Heart left ventricle (tissue), 16 donors: ENCODE measurements at regions of chr16 and their contacts with region 1.

Region 1: DNA sequence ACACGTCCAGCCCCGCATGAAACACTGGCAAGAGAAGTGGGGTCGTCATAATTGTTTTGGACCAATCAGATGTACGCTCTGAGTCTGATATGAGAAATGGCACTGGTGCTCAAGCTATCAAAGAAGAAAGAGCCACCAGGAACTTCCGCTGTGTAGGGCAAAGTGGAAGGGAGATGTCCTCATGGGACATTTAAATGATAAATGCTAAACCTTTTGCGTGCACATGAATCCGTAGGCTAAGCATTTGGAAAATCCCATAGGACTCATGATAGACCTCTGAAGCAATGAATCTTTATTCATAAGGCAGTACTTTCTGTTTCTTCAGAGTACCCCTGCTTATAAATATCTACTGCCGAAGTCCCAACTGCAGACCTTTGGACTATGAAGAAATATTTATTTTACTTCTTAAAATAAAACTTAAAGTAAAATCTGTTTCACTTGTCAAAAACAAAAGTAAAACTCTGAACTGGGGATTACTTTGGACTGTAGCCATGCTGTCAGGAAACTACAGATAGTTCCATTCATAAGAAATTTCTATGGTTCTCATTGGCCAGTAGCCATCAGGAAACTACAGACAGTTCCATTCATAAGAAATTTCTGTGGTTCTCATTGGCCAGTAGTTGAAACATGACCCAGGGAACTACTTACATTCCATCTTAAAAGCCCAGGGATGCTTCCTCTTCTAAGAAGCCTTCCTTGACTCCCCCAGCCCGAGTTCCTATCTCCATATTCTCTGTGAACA is 335.1 kb downstream of the HS3ST4 start:
- DNase-seq: peak in 1 of 5 donors; percentile 8
- ATAC-seq: peak in 1 of 4 donors; percentile 52
- H3K4me3 ChIP-seq: no peak overlapping the region
- H3K27ac ChIP-seq: no peak overlapping the region
- H3K4me1 ChIP-seq: peaks cover 0 to 3% (median 0%) of the 10 kb centered on the region in 12 donors
- H3K27me3 ChIP-seq: peaks cover 0 to 7% (median 0%) of the 10 kb centered on the region in 9 donors
- CTCF ChIP-seq: no peak
- POLR2A ChIP-seq: no peak

Region 2: DNA sequence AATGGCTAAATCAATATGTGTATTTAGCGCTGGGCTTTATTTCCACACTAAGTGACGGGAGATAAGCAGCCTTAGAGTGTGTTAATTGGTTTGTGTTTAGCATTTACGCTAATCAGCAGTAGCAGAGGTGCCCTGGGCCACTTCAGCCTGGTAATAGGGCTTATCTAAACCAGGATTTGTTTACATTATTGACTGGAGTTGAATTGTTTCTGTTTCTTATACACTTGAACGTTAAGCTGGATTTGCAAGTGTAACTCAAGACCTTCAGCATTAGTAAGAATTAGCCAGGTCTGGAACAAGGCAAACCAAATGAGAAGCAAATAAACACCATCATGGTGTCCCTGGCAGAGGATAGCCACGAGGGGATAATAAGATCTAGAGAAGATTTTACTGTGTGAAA is 21.5 kb before region 1 on chr16:
- intact Hi-C with region 1: no loop called
- DNase-seq: no peak
- ATAC-seq: no peak
- H3K4me3 ChIP-seq: no peak overlapping the region
- H3K27ac ChIP-seq: no peak overlapping the region
- H3K4me1 ChIP-seq: no peaks in the 10 kb centered on the region
- H3K27me3 ChIP-seq: peaks cover 0 to 6% (median 0%) of the 10 kb centered on the region in 9 donors
- CTCF ChIP-seq: no peak
- POLR2A ChIP-seq: no peak

Region 3: GRCh38 chr16:26051063-26051462 is 24.2 kb after region 1 on chr16:
- intact Hi-C with region 1: loop called in 1 of 10 experiments (anchors 2 kb)
- DNase-seq: no peak
- ATAC-seq: no peak
- H3K4me3 ChIP-seq: no peak overlapping the region
- H3K27ac ChIP-seq: no peak overlapping the region
- H3K4me1 ChIP-seq: no peaks in the 10 kb centered on the region
- H3K27me3 ChIP-seq: peaks cover 0 to 6% (median 0%) of the 10 kb centered on the region in 9 donors
- CTCF ChIP-seq: no peak
- POLR2A ChIP-seq: no peak